ENCODE measurements at regions of chr10 and their contacts with region 1.

Region 1: GRCh38 chr10:70815504-70816219 is at the start of gene SGPL1:
- DNase-seq: peak; percentile 70 to 93 (median 85)
- ATAC-seq: peak; percentile 94
- H3K4me3 ChIP-seq: peak within 1 kb of the TSS; percentile 48 to 75
- H3K4me3 Mint-ChIP-seq: peak within 1 kb of the TSS; percentile 93
- H3K27ac ChIP-seq: peak within 1 kb of the TSS; percentile 26 to 65
- H3K27ac Mint-ChIP-seq: peak within 1 kb of the TSS; percentile 94
- H3K4me1 ChIP-seq: peaks cover 19% of the 10 kb centered on the region
- H3K4me1 Mint-ChIP-seq: peaks cover 32% of the 10 kb centered on the region
- H3K27me3 ChIP-seq: no peaks in the 10 kb centered on the region
- H3K27me3 Mint-ChIP-seq: no peaks in the 10 kb centered on the region
- CTCF ChIP-seq: peak; percentile 95
- total RNA-seq, gene SGPL1: 14.5 to 15.5 TPM

Region 2: GRCh38 chr10:70227548-70228320 is 587.9 kb before region 1 on chr10:
- CTCF ChIA-PET with region 1: no interaction called
- POLR2A ChIA-PET with region 1: no interaction called
- intact Hi-C with region 1: loop called (anchors 2 to 5 kb)
- DNase-seq: no peak
- ATAC-seq: no peak
- H3K4me3 ChIP-seq: no peak overlapping the region
- H3K4me3 Mint-ChIP-seq: no peak overlapping the region
- H3K27ac ChIP-seq: no peak overlapping the region
- H3K27ac Mint-ChIP-seq: no peak overlapping the region
- H3K4me1 ChIP-seq: peaks cover 9% of the 10 kb centered on the region
- H3K4me1 Mint-ChIP-seq: peaks cover 35% of the 10 kb centered on the region
- H3K27me3 ChIP-seq: no peaks in the 10 kb centered on the region
- H3K27me3 Mint-ChIP-seq: no peaks in the 10 kb centered on the region
- CTCF ChIP-seq: no peak

Region 3: DNA sequence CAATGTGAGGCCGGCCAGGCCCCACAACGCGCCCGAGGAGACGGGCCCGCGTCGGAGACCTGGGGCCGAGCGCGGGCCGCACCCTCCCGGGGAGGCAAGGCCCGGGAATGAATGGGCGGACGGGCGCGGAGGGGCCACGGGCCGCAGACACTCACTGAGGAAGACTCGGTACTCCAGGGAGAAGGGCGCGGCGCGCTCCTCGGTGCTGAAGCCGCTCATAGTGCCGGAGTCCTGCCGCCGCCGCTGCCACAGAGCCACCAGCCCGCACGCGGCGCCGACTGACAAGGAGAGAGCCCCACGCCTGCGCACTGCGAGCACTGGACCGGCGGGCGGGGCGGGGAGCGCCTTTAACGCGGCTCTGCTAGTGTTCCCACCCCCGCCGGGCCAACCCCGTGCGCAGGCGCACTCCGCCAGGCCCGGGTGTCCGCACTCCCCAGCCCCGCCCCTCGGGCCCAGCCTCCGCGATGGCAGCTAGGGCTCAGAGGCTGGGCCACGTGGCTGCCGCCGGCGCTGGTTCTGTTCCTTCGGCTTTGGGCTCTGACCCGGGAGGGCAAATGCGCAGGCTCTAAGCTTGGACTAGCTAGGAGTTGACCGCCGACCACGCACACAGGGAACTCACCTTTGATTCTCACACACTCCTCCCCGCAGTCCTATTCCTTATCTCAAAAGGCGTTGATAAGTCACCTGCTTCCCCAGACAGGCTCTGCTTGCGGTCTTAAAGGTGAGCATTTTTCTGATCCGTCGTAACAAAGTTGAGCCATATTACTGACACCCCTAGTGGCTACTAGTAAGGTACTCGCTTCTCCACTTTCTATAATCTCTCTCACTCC is 582.3 kb before region 1 on chr10 and contains the start of gene PPA1:
- CTCF ChIA-PET with region 1: no interaction called
- POLR2A ChIA-PET with region 1: no interaction called
- intact Hi-C with region 1: loop called in 1 of 2 experiments (anchors 5 kb)
- DNase-seq: peak; percentile 98 to 100 (median 99)
- ATAC-seq: peak; percentile 93
- H3K4me3 ChIP-seq: peak within 1 kb of the TSS; percentile 87 to 90
- H3K4me3 Mint-ChIP-seq: peak within 1 kb of the TSS; percentile 89
- H3K27ac ChIP-seq: peak within 1 kb of the TSS; percentile 74 to 80
- H3K27ac Mint-ChIP-seq: peak within 1 kb of the TSS; percentile 93
- H3K4me1 ChIP-seq: peaks cover 9% of the 10 kb centered on the region
- H3K4me1 Mint-ChIP-seq: peaks cover 36% of the 10 kb centered on the region
- H3K27me3 ChIP-seq: no peaks in the 10 kb centered on the region
- H3K27me3 Mint-ChIP-seq: peaks cover 4% of the 10 kb centered on the region
- CTCF ChIP-seq: no peak
- total RNA-seq, gene PPA1: 79.9 to 83.1 TPM

Region 4: DNA sequence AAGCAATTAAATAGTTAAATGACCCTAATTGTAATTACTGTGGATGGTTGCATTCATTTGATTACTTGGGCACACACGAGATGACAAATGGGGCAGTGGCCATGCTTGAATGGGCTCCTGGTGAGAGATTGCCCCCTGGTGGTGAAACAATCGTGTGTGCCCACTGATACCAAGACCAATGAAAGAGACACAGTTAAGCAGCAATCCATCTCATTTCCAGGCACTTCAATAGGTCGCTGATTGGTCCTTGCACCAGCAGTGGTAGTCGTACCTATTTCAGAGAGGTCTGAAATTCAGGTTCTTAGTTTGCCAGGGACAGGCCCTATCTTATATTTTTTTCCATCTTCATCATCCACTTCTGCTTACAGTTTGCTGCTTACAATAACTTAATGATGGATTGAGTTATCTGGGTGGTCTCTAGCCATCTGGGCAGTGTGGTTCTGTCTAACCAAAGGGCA is 64.4 kb after region 1 on chr10:
- CTCF ChIA-PET with region 1: interaction called, 17 read pairs
- POLR2A ChIA-PET with region 1: no interaction called
- intact Hi-C with region 1: loop called (anchors 1 kb)
- DNase-seq: peak; percentile 45 to 87 (median 76)
- ATAC-seq: peak; percentile 92
- H3K4me3 ChIP-seq: no peak overlapping the region
- H3K4me3 Mint-ChIP-seq: no peak overlapping the region
- H3K27ac ChIP-seq: no peak overlapping the region
- H3K27ac Mint-ChIP-seq: no peak overlapping the region
- H3K4me1 ChIP-seq: no peaks in the 10 kb centered on the region
- H3K4me1 Mint-ChIP-seq: peaks cover 2% of the 10 kb centered on the region
- H3K27me3 ChIP-seq: no peaks in the 10 kb centered on the region
- H3K27me3 Mint-ChIP-seq: no peaks in the 10 kb centered on the region
- CTCF ChIP-seq: peak; percentile 84

Region 5: GRCh38 chr10:70887804-70888800 is 72.4 kb after region 1 on chr10 and contains the start of gene PCBD1:
- CTCF ChIA-PET with region 1: interaction called, 3 read pairs
- POLR2A ChIA-PET with region 1: no interaction called
- intact Hi-C with region 1: loop called in 1 of 2 experiments (anchors 1 kb)
- DNase-seq: peak; percentile 36 to 82 (median 75)
- ATAC-seq: peak; percentile 93
- H3K4me3 ChIP-seq: peak within 1 kb of the TSS; percentile 69 to 91
- H3K4me3 Mint-ChIP-seq: peak within 1 kb of the TSS; percentile 89
- H3K27ac ChIP-seq: peak within 1 kb of the TSS; percentile 65 to 92
- H3K27ac Mint-ChIP-seq: peak within 1 kb of the TSS; percentile 91
- H3K4me1 ChIP-seq: peaks cover 16% of the 10 kb centered on the region
- H3K4me1 Mint-ChIP-seq: peaks cover 14% of the 10 kb centered on the region
- H3K27me3 ChIP-seq: no peaks in the 10 kb centered on the region
- H3K27me3 Mint-ChIP-seq: no peaks in the 10 kb centered on the region
- CTCF ChIP-seq: no peak
- total RNA-seq, gene PCBD1: 4.3 to 4.5 TPM